Left colon (tissue), 2 donors: ENCODE measurements at regions of chr7 and their contacts with region 1.

Region 1: DNA sequence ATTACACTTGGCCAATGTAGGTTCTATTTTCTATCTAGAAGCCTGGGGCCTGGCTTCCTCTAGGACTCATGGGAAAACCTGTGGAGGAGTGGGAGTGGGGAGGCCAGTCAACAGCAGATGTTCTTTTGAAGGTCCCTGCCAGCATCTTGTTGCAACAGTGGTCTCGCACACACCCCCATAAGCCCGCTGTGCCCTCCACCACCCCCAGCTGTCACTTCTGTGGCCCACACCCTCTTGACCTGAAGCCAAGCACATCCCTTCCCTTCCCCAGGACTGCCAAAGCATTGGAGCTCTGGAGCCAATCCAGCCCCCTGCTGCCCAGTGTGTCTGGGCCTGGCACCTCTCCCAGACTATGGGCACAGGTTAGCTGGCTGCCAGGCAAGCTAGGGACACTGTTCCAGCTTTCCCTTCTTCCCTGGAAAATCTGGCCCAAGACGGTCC is 1.9 kb upstream of the STX1A start:
- DNase-seq: peak in 1 of 2 donors; percentile 51
- ATAC-seq: peak; percentile 42

Region 2: GRCh38 chr7:73606801-73607691 is 114.4 kb before region 1 on chr7:
- intact Hi-C with region 1: loop called (anchors 5 kb)
- DNase-seq: peak in 1 of 2 donors; percentile 66
- ATAC-seq: peak; percentile 59

Region 3: GRCh38 chr7:73618538-73618937 is 102.9 kb before region 1 on chr7:
- intact Hi-C with region 1: no loop called
- DNase-seq: no peak
- ATAC-seq: no peak